Thyroid gland (tissue), 4 donors: ENCODE measurements at regions of chr10 and their contacts with region 1.

Region 1: DNA sequence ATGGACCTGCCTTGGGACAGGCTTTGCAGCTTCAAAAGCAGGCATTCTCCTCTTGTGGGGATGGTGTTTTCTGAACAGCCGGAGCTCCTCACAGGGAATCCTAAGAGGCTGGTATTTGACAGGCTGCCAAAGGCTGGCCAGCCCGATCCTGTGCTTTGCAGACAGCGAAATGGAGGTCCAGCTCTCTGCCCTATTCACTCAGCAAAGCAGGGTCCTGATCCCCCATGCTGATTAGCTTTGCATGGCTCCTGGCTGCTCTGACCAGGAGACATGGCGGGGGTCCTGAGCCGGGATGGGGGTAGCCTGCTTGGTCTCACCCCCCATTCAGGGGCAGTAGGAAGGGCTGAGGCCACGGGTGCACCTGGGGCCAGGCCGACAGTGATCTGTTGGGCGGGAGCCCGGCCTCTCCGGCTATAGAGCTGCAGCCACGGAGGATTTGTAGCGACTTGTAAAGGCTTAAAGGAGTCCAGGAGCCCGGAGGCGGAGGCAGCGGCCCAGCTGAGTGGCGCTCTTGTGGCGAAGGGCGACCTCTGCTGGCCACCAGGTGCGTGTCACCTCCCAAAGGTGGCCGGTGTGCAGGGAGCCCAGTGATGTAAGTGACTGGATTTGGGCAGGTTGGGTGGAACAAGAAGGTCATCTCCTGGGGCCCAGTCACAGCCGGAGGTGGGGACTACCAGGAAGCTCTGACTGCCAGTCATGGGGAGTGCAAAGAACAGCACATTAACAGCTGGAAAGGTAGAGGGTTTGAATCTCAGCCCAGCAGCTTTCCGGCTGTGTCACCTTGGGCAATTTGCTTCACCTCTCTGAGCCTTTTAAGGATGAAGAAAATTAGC is 126.5 kb downstream of the ZMIZ1 start:
- DNase-seq: peak; percentile 90 to 92
- H3K4me3 ChIP-seq: no peak overlapping the region
- H3K27ac ChIP-seq: peak overlapping the region; percentile 73 to 93 (median 90)
- H3K4me1 ChIP-seq: peaks cover 29 to 51% of the 10 kb centered on the region in 2 donors
- H3K27me3 ChIP-seq: no peaks in the 10 kb centered on the region
- CTCF ChIP-seq: peak; percentile 78 to 97 (median 93)
- POLR2A ChIP-seq: peak in 1 of 2 donors; percentile 14

Region 2: GRCh38 chr10:78047314-78047891 is 1147.9 kb before region 1 on chr10:
- intact Hi-C with region 1: loop called (anchors 5 kb)
- DNase-seq: peak; percentile 90 to 94
- H3K4me3 ChIP-seq: no peak overlapping the region
- H3K27ac ChIP-seq: no peak overlapping the region
- H3K4me1 ChIP-seq: peaks cover 26 to 46% of the 10 kb centered on the region in 2 donors
- H3K27me3 ChIP-seq: no peaks in the 10 kb centered on the region
- CTCF ChIP-seq: peak; percentile 48 to 92 (median 89)
- POLR2A ChIP-seq: no peak

Region 3: GRCh38 chr10:78211561-78212051 is 983.7 kb before region 1 on chr10:
- intact Hi-C with region 1: loop called (anchors 5 kb)
- DNase-seq: peak; percentile 67 to 75
- H3K4me3 ChIP-seq: no peak overlapping the region
- H3K27ac ChIP-seq: peak overlapping the region; percentile 9 to 61 (median 24)
- H3K4me1 ChIP-seq: peaks cover 22 to 30% of the 10 kb centered on the region in 2 donors
- H3K27me3 ChIP-seq: no peaks in the 10 kb centered on the region
- CTCF ChIP-seq: peak; percentile 28 to 84 (median 67)
- POLR2A ChIP-seq: no peak

Region 4: GRCh38 chr10:78302989-78303854 is 892.1 kb before region 1 on chr10:
- intact Hi-C with region 1: loop called (anchors 10 kb)
- DNase-seq: peak; percentile 96 to 97
- H3K4me3 ChIP-seq: peak overlapping the region; percentile 12 to 40 (median 35)
- H3K27ac ChIP-seq: peak overlapping the region; percentile 89 to 95 (median 89)
- H3K4me1 ChIP-seq: peaks cover 4 to 14% of the 10 kb centered on the region in 2 donors
- H3K27me3 ChIP-seq: no peaks in the 10 kb centered on the region
- CTCF ChIP-seq: peak; percentile 43 to 83 (median 70)
- POLR2A ChIP-seq: peak; percentile 51 to 92

Region 5: GRCh38 chr10:79068562-79069324 is 126.6 kb before region 1 on chr10 and contains the start of gene ZMIZ1:
- intact Hi-C with region 1: loop called (anchors 5 kb)
- DNase-seq: peak; percentile 92 to 93
- H3K4me3 ChIP-seq: peak within 1 kb of the TSS; percentile 64 to 95 (median 89)
- H3K27ac ChIP-seq: peak within 1 kb of the TSS; percentile 98 to 99 (median 99)
- H3K4me1 ChIP-seq: peaks cover 38 to 39% of the 10 kb centered on the region in 2 donors
- H3K27me3 ChIP-seq: no peaks in the 10 kb centered on the region
- CTCF ChIP-seq: peak in 2 of 6 experiments; percentile 6 to 38
- POLR2A ChIP-seq: peak in 1 of 2 donors; percentile 95
- total RNA-seq, gene ZMIZ1: 59.9 to 128 (median 94.4) TPM

Region 6: DNA sequence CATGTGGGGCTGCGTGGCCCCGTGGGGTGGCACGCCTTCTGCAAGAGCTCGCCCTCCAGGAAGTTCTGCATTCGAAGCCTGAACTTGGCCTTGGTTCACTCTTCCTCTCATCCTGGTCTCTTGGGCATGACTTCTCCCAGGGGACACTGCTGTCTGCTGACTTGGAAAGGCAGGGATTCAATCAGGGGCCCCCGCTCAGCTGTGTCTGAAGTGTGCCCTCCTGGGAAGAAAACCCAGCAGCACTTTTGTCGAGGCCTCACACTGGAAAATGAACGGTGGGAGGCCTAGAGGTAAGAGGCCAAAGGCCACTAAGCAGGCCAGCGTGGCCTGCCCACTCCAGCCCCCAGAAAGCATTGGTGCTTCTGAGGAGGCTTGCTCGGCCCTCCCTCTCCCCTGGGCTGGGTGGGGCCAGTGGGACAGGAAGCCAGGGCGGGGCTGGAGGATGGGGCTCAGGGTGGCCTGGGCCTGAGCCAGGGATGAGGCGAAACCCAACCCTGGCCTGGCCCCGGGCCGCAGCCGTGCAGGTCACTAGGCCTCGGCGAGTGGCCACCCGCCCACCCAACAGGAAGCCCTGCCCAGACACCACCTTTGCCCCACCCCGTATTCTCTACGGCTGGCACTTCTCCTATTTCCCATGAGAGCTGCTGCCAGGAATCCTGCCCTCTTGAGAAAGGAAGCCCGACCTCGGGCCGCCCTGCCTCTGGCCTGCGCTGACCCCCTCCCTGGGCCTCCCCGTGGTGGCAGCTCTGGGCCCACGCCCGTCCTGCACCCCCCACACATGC is 45.5 kb before region 1 on chr10:
- intact Hi-C with region 1: no loop called
- DNase-seq: peak; percentile 82
- H3K4me3 ChIP-seq: no peak overlapping the region
- H3K27ac ChIP-seq: peak overlapping the region; percentile 94 to 99 (median 95)
- H3K4me1 ChIP-seq: peaks cover 92 to 99% of the 10 kb centered on the region in 2 donors
- H3K27me3 ChIP-seq: no peaks in the 10 kb centered on the region
- CTCF ChIP-seq: no peak
- POLR2A ChIP-seq: no peak